ENCODE measurements at regions of chr13 and their contacts with region 1.

Region 1: GRCh38 chr13:47930649-47931165 is 70.4 kb downstream of the SUCLA2 start:
- DNase-seq: no peak
- H3K4me3 Mint-ChIP-seq: no peak overlapping the region
- H3K27ac Mint-ChIP-seq: no peak overlapping the region
- H3K4me1 Mint-ChIP-seq: no peaks in the 10 kb centered on the region
- H3K27me3 Mint-ChIP-seq: no peaks in the 10 kb centered on the region
- CTCF ChIP-seq: no peak

Region 2: GRCh38 chr13:47831265-47831664 is 99.4 kb before region 1 on chr13:
- CTCF ChIA-PET with region 1: no interaction called
- intact Hi-C with region 1: no loop called
- DNase-seq: no peak
- H3K4me3 Mint-ChIP-seq: no peak overlapping the region
- H3K27ac Mint-ChIP-seq: no peak overlapping the region
- H3K4me1 Mint-ChIP-seq: no peaks in the 10 kb centered on the region
- H3K27me3 Mint-ChIP-seq: no peaks in the 10 kb centered on the region
- CTCF ChIP-seq: no peak

Region 3: DNA sequence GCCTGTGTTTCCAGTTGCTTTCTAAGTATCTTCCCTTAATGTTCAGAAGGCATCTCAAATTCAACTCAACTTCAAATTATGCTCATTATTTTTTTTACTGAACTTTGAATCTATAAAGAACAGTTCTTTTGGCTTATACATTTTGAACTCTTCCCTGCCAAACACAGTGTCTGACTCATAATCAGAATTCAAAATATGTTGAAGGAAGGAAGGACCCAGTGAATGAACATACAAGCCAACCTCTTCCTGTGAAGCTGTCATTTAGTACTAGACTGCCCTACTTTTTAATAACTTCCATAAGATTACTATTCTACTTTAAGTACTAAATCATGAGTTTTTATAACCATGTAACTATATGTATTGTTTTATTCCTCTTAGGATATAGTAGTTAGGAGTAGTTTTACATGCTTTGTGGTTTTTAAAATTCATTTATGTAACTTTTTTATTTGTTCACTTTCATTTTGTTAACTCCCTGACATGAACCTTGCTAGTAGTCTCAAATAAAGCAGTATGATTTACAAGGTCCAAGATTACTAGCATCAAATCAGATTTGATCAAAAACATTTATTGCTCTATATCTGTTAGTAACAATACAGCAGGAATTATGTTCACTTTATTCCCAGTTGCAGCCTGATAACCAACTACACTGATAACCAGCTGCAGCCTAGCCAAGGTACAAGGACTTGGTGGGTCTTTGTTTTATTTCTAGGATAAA is 113.2 kb after region 1 on chr13:
- CTCF ChIA-PET with region 1: interaction called, 14 read pairs
- intact Hi-C with region 1: no loop called
- DNase-seq: no peak
- H3K4me3 Mint-ChIP-seq: no peak overlapping the region
- H3K27ac Mint-ChIP-seq: no peak overlapping the region
- H3K4me1 Mint-ChIP-seq: peaks cover 6% of the 10 kb centered on the region
- H3K27me3 Mint-ChIP-seq: no peaks in the 10 kb centered on the region
- CTCF ChIP-seq: no peak

Region 4: DNA sequence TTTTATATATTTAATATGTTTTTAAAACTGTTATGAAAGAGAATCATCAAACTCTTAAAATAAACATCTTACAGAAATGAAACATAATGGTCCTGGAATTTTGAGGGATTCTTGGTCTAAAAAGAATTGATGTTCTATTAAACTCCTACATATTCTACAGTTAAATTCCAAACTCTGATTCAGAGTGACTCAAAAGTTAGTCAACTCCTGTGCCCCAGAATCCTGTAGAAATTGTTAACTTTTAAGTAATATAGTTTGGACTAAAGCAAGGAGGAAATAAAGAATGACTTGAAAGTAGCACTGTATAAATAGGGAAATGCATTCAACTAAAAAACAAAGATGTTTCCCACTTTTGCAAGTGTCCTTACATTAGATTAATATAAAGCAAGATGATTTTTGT is 1092.7 kb after region 1 on chr13:
- CTCF ChIA-PET with region 1: no interaction called
- intact Hi-C with region 1: no loop called
- DNase-seq: no peak
- H3K4me3 Mint-ChIP-seq: no peak overlapping the region
- H3K27ac Mint-ChIP-seq: no peak overlapping the region
- H3K4me1 Mint-ChIP-seq: no peaks in the 10 kb centered on the region
- H3K27me3 Mint-ChIP-seq: no peaks in the 10 kb centered on the region
- CTCF ChIP-seq: no peak

Measured in Calu3 (cell line).